ENCODE measurements at regions of chr9 and their contacts with region 1.

Region 1: DNA sequence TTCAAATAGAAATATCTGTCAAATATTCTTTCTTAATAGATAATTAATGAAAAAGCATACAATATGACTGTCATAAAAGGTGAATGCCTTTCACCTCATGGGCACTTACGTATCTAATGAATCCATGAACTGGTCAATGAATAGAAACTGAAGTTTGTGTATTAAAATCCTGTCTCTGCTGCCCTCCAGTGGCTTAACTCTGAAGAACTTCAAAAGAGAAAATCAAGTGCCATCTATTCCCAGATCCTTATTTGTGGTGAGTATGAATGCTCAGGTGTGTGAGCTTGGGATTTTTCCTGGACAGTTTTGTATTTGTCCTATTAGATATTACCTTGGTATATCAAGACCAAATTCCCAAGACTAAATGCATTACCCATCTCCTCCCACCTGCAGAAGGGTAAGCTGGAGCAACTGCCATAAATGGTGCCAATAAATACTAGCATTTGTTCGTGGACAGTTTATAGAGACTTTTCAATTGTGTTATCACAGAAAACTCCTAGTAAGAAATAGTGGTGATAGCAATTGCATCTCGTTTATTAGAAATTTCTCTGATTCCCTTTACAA is 44.0 kb upstream of the SVEP1 start:
- DNase-seq: no peak
- H3K4me3 ChIP-seq: no peak overlapping the region
- H3K27ac ChIP-seq: no peak overlapping the region
- H3K4me1 ChIP-seq: no peaks in the 10 kb centered on the region
- H3K27me3 ChIP-seq: no peaks in the 10 kb centered on the region
- CTCF ChIP-seq: peak in 2 of 3 experiments; percentile 72 to 73

Region 2: DNA sequence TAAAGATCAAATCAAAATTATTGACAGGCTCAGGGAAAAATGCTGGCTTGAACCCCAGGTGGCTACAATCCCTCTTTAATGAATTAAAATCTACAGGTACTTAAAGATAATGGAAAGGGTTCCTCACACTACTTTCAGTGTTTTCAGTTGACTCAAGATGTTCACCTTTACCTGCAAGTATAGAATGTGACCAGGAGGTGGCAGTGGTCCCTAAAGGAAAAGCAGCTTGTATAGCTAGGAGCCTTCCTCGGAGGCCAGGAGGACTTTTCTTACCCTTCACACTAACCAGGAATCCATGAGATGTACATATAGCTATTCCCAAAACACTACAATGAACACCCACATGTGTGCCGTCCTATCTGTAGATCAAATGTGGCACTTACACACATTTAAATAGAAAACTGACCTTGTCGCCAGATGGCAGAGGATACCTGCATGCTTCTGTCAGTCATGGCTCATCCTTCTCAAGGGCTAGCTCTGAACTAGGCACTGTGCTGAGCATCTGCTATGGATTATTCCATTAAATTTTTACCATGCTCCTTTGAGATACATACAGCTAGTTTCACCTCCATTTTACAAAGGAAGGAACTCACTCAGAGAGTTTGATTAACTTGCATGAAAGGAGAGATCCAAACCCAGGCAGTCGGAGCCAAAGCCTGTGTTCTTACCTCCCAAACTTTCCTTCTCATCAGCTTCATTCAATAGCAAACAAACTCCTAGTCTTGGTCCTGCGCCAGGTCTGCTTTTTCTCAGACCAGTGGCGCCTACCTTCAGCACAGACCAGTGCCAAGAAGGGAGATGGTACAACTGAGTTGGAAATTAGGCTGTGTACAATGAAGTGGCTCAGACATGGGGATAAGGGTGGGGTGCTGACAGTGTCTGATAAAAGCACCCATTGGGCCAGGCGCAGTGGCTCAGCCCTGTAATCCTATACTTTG is 440.1 kb before region 1 on chr9:
- intact Hi-C with region 1: loop called (anchors 2 kb)
- DNase-seq: peak in 1 of 2 donors; percentile 75
- H3K4me3 ChIP-seq: no peak overlapping the region
- H3K27ac ChIP-seq: no peak overlapping the region
- H3K4me1 ChIP-seq: no peaks in the 10 kb centered on the region
- H3K27me3 ChIP-seq: no peaks in the 10 kb centered on the region
- CTCF ChIP-seq: peak; percentile 60 to 72 (median 64)

Region 3: DNA sequence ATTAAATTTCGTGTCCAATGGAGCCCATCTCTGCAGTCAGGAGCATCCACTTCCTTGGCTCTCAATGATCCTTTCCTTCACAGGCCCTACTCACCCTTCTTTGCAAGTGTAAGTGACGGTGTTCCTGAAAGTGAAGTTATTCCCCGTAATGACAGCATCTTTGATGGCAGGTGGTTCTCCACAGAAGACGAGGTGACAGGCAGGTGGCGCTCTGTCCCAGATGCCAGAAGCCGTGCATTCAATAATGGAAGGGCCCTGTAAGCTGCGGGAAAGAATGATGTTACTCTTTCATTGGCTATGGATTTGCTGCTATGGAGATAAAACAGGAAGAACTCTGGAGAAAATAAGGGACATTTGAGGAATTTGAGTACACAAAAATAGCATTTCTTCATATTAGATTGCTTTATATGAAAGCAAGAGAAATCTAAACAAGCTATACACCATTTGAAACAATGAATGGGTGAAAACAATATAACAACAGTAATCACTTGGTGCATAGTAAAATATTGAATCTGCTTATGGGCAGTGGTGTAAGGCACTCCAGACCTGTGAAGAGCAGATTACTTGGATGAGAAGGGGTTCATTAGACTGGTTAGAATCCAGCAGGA is 195.9 kb before region 1 on chr9:
- intact Hi-C with region 1: loop called (anchors 5 kb)
- DNase-seq: peak in 1 of 2 donors; percentile 64
- H3K4me3 ChIP-seq: no peak overlapping the region
- H3K27ac ChIP-seq: no peak overlapping the region
- H3K4me1 ChIP-seq: no peaks in the 10 kb centered on the region
- H3K27me3 ChIP-seq: no peaks in the 10 kb centered on the region
- CTCF ChIP-seq: peak; percentile 16 to 50 (median 40)

Region 4: DNA sequence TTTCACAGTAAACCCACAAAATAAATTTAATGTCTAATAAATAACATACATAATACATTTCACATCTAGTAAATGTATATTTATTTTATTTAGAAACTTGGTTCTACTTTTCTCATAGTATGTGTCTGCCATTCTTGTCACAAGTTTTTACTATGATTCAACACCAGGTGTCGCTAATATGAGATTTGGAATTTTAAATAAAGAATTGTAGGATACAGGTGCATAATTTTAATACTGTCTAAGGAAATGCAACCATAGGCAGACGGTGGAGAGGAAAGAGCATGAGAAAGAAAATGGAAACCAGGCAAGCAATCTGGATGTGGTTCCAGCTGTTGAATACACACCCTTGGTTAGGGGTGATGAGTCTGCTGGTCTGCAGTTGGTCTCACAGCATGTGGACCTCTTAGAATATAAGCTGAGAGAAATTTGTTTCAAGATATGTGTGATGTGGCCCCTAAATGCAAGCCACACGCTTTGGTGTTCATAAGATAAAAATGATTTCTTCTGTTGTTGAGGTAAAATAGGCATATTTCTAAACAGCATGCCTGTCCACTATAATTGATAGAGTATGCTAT is 171.2 kb before region 1 on chr9:
- intact Hi-C with region 1: loop called (anchors 2 kb)
- DNase-seq: no peak
- H3K4me3 ChIP-seq: no peak overlapping the region
- H3K27ac ChIP-seq: no peak overlapping the region
- H3K4me1 ChIP-seq: no peaks in the 10 kb centered on the region
- H3K27me3 ChIP-seq: no peaks in the 10 kb centered on the region
- CTCF ChIP-seq: peak; percentile 26 to 57 (median 36)

Region 5: GRCh38 chr9:110538225-110539041 is 85.1 kb before region 1 on chr9:
- intact Hi-C with region 1: loop called (anchors 5 kb)
- DNase-seq: no peak
- H3K4me3 ChIP-seq: no peak overlapping the region
- H3K27ac ChIP-seq: peak overlapping the region; percentile 19 to 34
- H3K4me1 ChIP-seq: peaks cover 0 to 32% of the 10 kb centered on the region in 2 donors
- H3K27me3 ChIP-seq: no peaks in the 10 kb centered on the region
- CTCF ChIP-seq: no peak

Region 6: DNA sequence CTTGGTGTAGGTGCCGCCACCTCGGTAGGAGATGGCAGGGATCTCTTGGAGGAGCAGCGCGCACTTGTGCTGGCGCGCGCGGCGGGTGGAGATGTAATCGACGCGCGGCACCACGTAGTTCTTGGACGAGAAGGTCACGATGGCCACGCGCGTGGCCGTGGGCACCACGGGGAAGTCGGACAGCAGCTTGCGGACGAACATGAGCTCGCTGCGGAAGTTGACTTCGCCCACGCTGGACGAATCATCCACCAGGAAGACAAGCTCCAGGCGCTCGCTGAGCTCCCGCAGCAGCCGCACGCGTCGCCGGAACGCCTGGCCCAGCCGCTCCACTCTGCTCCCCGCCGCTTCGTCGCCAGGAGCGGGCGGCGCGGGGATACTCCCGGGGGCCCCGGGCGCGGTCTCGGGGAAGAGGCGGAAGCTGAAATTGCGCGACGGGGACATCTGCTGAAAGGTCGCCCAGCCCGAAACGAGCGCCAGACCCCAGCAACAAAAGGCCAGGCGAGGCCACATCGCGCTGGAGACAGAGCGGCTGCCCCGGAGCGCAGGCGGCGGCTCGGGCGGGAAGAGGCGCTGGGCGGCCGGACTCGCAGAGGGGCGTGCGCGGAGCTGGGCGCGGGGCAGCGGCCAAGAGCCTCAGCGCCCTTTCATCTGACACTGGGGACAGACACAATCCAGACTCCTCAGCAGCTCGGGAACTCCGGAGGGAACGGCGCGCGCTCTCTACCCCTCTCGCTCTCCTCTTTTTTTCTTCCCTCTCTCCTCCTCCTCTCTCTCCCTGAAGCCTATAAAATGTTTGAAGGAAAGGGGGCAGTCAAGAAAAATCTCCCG is 44.3 kb before region 1 on chr9 and contains the start of gene SVEP1:
- intact Hi-C with region 1: loop called (anchors 5 kb)
- DNase-seq: peak in 1 of 2 donors; percentile 74
- H3K4me3 ChIP-seq: peak within 1 kb of the TSS; percentile 74 to 96
- H3K27ac ChIP-seq: peak within 1 kb of the TSS; percentile 80 to 84
- H3K4me1 ChIP-seq: peaks cover 0 to 2% of the 10 kb centered on the region in 2 donors
- H3K27me3 ChIP-seq: no peaks in the 10 kb centered on the region
- CTCF ChIP-seq: no peak
- total RNA-seq, gene SVEP1: 41.8 TPM

Region 7: GRCh38 chr9:110933350-110934001 is 309.9 kb after region 1 on chr9:
- intact Hi-C with region 1: no loop called
- DNase-seq: no peak
- H3K4me3 ChIP-seq: no peak overlapping the region
- H3K27ac ChIP-seq: peak overlapping the region; percentile 84 to 91
- H3K4me1 ChIP-seq: peaks cover 9 to 44% of the 10 kb centered on the region in 2 donors
- H3K27me3 ChIP-seq: no peaks in the 10 kb centered on the region
- CTCF ChIP-seq: no peak